Transverse colon (tissue), 4 donors: ENCODE measurements at regions of chr11 and their contacts with region 1.

Region 1: GRCh38 chr11:68003846-68004550 is at the start of gene UNC93B1:
- DNase-seq: peak; percentile 93
- H3K4me3 ChIP-seq: peak within 1 kb of the TSS; percentile 57 to 90 (median 76)
- H3K27ac ChIP-seq: peak within 1 kb of the TSS; percentile 88 to 91 (median 89)
- H3K4me1 ChIP-seq: peaks cover 8 to 32% (median 17%) of the 10 kb centered on the region in 4 donors
- H3K27me3 ChIP-seq: no peaks in the 10 kb centered on the region
- CTCF ChIP-seq: no peak
- EP300 ChIP-seq: no peak
- POLR2A ChIP-seq: peak; percentile 72
- total RNA-seq, gene UNC93B1: 32.2 to 67.7 (median 54.7) TPM

Region 2: GRCh38 chr11:68206187-68206601 is 202.2 kb after region 1 on chr11:
- in situ Hi-C with region 1: no loop called
- intact Hi-C with region 1: loop called (anchors 10 kb)
- DNase-seq: no peak
- H3K4me3 ChIP-seq: no peak overlapping the region
- H3K27ac ChIP-seq: peak overlapping the region in 1 of 4 donors; percentile 5
- H3K4me1 ChIP-seq: peaks cover 29 to 84% (median 36%) of the 10 kb centered on the region in 4 donors
- H3K27me3 ChIP-seq: no peaks in the 10 kb centered on the region
- CTCF ChIP-seq: peak; percentile 73 to 86 (median 83)
- EP300 ChIP-seq: no peak
- POLR2A ChIP-seq: no peak